ENCODE measurements at regions of chr17 and their contacts with region 1.

Region 1: DNA sequence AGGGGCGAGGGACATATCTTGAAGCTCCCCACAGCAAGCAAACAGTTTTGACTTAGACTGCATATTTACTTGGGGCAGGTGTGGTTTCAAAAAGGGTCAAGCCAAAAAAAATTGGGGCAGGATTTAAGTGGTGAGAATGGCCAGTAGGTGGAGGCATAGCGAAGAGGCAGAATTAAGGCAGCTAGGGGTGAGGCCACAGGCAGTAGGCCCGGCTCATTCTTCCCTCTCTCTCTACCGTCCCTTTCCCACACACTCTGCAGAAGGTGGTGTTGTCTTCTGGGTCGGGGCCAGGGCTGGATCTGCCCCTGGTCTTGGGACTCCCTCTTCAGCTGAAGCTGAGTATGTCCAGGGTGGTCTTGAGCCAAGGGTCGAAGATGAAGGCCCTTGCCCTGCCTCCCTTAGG is 2.6 kb downstream of the SHBG start:
- DNase-seq: no peak
- H3K4me3 ChIP-seq: no peak overlapping the region
- H3K27ac ChIP-seq: no peak overlapping the region
- H3K27me3 ChIP-seq: no peaks in the 10 kb centered on the region
- CTCF ChIP-seq: peak; percentile 68

Region 2: GRCh38 chr17:7620835-7621234 is 11.7 kb before region 1 on chr17:
- CTCF ChIA-PET with region 1: interaction called, 17 read pairs
- POLR2A ChIA-PET with region 1: interaction called, 4 read pairs
- DNase-seq: no peak
- H3K4me3 ChIP-seq: no peak overlapping the region
- H3K27ac ChIP-seq: no peak overlapping the region
- H3K27me3 ChIP-seq: peaks cover 3% of the 10 kb centered on the region
- CTCF ChIP-seq: no peak

Region 3: DNA sequence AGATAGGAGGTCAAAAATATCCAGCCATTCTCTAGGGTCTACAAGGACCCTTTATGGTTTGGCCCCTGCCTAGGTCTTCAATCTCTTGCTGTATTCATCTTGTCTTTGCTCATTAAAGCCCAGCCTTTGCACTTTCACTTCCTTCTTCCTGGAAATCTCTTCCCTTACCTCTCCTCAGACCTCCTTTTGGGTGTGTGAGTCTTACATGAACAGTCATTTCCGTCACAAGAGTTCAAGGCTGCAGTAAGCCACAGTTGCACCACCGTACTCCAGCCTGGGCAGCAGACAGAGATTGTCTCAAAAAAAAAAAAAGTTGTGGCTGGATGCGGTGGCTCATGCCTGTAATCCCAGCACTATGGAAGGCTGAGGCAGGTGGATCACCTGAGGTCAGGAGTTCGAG is 12.3 kb after region 1 on chr17:
- CTCF ChIA-PET with region 1: interaction called, 11 read pairs
- POLR2A ChIA-PET with region 1: no interaction called
- DNase-seq: no peak
- H3K4me3 ChIP-seq: no peak overlapping the region
- H3K27ac ChIP-seq: no peak overlapping the region
- H3K27me3 ChIP-seq: peaks cover 7% of the 10 kb centered on the region
- CTCF ChIP-seq: no peak

Region 4: GRCh38 chr17:7650509-7651096 is 18.1 kb after region 1 on chr17 and contains the start of gene ATP1B2:
- CTCF ChIA-PET with region 1: interaction called, 11 read pairs
- POLR2A ChIA-PET with region 1: no interaction called
- DNase-seq: no peak
- H3K4me3 ChIP-seq: peak within 1 kb of the TSS; percentile 22
- H3K27ac ChIP-seq: no peak within 1 kb of the TSS
- H3K27me3 ChIP-seq: peaks cover 55% of the 10 kb centered on the region
- CTCF ChIP-seq: no peak
- polyA plus RNA-seq, gene ATP1B2: 0.05 and 0.11 TPM in 2 replicates